ENCODE measurements at regions of chr1 and their contacts with region 1.

Region 1: GRCh38 chr1:115138968-115139367 is 49.7 kb upstream of the TSPAN2 start:
- DNase-seq: peak; percentile 92
- ATAC-seq: peak; percentile 92

Region 2: DNA sequence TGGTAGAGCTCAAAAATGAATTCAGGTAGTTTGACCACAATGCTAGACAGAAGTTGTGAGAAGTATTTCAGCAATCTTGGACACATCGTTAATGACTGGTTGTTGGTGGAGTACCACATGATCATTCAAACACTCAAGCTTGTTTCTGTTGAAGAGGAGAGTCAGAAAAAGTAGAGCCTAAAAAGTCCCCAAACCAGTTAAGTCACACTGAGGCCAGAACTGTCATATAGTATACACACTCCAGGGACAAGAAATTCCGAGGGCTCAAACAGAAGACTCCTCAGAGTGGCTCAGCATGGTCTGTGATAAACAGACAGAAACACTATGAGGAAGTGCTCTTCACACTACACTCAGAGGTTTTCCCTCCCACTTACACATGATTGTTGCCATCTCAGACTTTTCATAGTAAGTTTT is 633.8 kb before region 1 on chr1:
- intact Hi-C with region 1: no loop called
- DNase-seq: no peak
- ATAC-seq: no peak

Region 3: DNA sequence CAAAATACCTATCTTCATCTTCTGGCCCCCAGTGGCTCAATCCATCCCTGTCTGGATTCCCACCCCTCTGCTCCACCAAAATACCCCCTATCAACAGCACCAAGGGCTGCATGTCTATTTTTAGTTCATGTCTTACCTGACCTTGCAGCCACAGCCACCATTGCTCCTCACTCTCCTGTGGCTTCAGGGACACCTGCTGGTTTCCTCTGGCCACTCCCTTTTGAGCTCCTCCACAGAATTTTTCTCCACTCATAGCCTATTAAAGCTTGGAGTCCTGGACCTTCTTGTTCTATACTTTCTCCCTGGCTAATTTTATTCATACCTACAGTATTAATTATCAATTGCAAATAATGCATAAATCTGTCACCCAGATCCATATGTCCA is 324.4 kb after region 1 on chr1:
- intact Hi-C with region 1: loop called (anchors 5 kb)
- DNase-seq: peak; percentile 60
- ATAC-seq: peak; percentile 84

Region 4: DNA sequence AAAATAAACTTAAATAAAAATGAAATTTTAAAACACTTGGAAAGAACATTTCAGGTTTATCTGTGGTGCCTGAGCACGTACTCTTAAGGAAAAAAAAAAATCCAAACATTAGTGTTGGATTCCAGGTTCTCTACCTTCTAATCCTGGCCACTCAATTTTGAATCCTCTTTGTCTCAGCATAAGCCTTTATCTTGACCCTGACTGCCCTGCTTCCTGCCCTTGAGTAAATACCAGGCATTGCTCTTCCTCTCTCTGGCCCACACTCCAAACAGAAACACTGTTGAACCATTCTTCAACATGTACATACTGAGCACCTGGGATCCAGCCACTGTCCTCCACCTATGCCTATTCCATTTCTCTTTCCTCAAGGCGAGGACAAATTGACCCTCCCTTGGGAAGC is 491.4 kb after region 1 on chr1:
- intact Hi-C with region 1: no loop called
- DNase-seq: no peak
- ATAC-seq: peak; percentile 25

Measured in left ventricle myocardium superior (tissue), 1 donor.